Activated CD4-positive, alpha-beta T cell treated with anti-CD3 and anti-CD28 coated beads, Interleukin-2, amount 10 ng/mL, durations not matched to agents 24 days and 14 days (primary cell): ENCODE measurements at regions of chr20 and their contacts with region 1.

Region 1: DNA sequence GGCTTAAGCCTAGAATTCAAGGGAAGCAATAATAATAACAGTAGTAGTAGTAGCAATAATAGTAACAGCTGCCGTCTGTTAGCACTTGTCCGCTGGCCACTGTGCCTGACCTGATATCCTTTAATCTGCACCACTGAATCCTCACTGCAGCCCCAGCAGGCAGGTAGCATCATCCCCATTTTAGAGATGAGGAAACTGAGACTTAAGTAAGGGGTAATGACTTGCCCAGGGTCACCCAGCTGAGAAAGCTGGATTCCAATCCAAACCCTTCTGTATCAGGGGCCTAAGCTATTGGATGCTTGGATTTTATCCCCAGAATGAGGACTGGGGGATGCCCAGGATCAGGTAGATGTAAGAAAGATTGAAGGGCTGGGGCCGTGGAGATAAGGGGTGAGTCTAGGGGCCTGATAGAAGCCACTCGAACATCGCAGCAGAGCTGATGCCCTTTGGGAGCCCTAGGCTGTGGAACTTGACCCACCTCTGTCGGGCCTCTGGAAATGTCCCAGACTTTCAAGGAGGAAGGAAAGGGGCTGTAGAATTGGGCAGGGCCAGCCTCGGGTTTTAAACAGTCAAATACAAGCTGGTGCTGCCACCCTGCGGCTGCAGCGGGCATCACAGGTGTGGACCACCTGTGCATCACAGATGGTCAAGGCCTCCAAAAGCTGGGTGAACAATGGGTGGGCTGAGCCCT is 102.1 kb upstream of the MYL9 start:
- DNase-seq: peak; percentile 92
- H3K4me3 Mint-ChIP-seq: no peak overlapping the region
- H3K27ac Mint-ChIP-seq: no peak overlapping the region
- H3K4me1 Mint-ChIP-seq: peaks cover 12% of the 10 kb centered on the region
- H3K27me3 Mint-ChIP-seq: peaks cover 7% of the 10 kb centered on the region

Region 2: DNA sequence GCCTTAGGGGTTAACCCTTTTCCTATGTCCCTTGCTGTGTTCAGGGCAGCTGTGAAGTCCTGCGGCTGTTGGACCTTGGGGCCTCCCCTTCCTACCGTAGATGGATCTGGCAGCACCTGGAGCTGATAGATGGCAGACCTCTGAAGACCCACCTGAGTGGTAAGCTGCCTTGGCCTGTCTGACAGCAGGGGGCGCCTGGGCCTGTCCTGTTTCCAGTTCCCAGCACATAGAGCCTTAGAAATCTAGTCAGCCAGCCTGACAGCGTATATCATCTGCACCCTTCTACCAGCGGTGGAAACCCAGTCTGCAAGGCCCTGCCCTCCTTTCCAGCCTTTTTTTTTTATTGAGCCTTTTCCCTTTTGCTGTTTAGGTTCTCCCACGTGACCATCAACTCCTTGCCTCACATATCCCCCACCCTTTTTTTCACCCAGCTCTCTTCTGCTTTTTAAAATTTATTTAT is 444.2 kb before region 1 on chr20:
- intact Hi-C with region 1: loop called (anchors 1 kb)
- DNase-seq: peak; percentile 90
- H3K4me3 Mint-ChIP-seq: no peak overlapping the region
- H3K27ac Mint-ChIP-seq: no peak overlapping the region
- H3K4me1 Mint-ChIP-seq: peaks cover 2% of the 10 kb centered on the region
- H3K27me3 Mint-ChIP-seq: peaks cover 13% of the 10 kb centered on the region

Region 3: GRCh38 chr20:36155991-36156390 is 283.2 kb before region 1 on chr20:
- intact Hi-C with region 1: loop called (anchors 2 kb)
- DNase-seq: no peak
- H3K4me3 Mint-ChIP-seq: no peak overlapping the region
- H3K27ac Mint-ChIP-seq: no peak overlapping the region
- H3K4me1 Mint-ChIP-seq: peaks cover 3% of the 10 kb centered on the region
- H3K27me3 Mint-ChIP-seq: peaks cover 46% of the 10 kb centered on the region

Region 4: GRCh38 chr20:36199345-36200257 is 239.6 kb before region 1 on chr20:
- intact Hi-C with region 1: loop called (anchors 1 kb)
- DNase-seq: peak; percentile 92
- H3K4me3 Mint-ChIP-seq: no peak overlapping the region
- H3K27ac Mint-ChIP-seq: no peak overlapping the region
- H3K4me1 Mint-ChIP-seq: peaks cover 5% of the 10 kb centered on the region
- H3K27me3 Mint-ChIP-seq: peaks cover 11% of the 10 kb centered on the region

Region 5: GRCh38 chr20:36273414-36274180 is 165.6 kb before region 1 on chr20:
- intact Hi-C with region 1: loop called (anchors 1 kb)
- DNase-seq: no peak
- H3K4me3 Mint-ChIP-seq: no peak overlapping the region
- H3K27ac Mint-ChIP-seq: no peak overlapping the region
- H3K4me1 Mint-ChIP-seq: no peaks in the 10 kb centered on the region
- H3K27me3 Mint-ChIP-seq: peaks cover 7% of the 10 kb centered on the region

Region 6: DNA sequence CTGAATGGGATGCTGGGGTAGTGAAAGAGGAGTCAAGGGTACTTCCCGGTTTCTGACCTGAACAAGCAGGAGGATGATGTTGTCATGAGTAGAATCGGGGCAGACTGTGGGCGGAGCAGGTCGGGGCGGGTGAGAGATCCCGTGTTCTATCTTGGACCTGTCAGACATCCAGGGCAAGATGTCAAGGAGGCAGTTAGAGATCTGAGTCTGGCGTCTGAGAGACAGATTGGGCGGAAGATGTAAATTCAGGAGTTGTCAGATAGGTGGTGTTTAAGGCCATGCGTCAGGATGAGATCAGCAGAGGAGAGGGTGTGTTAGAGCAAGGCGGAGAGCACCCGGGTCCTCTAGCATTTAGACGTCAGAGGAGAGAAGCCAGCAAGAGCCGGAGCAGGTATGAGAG is 17.5 kb before region 1 on chr20:
- intact Hi-C with region 1: no loop called
- DNase-seq: no peak
- H3K4me3 Mint-ChIP-seq: no peak overlapping the region
- H3K27ac Mint-ChIP-seq: no peak overlapping the region
- H3K4me1 Mint-ChIP-seq: no peaks in the 10 kb centered on the region
- H3K27me3 Mint-ChIP-seq: peaks cover 13% of the 10 kb centered on the region